GM10248 (cell line): ENCODE measurements at regions of chr20 and their contacts with region 1.

Region 1: GRCh38 chr20:50790651-50791277 is 4.1 kb upstream of the BCAS4 start:
- DNase-seq: peak; percentile 90
- CTCF ChIP-seq: peak; percentile 92

Region 2: GRCh38 chr20:50689864-50690633 is 100.7 kb before region 1 on chr20:
- CTCF ChIA-PET with region 1: no interaction called
- POLR2A ChIA-PET with region 1: no interaction called
- DNase-seq: no peak
- CTCF ChIP-seq: no peak

Region 3: DNA sequence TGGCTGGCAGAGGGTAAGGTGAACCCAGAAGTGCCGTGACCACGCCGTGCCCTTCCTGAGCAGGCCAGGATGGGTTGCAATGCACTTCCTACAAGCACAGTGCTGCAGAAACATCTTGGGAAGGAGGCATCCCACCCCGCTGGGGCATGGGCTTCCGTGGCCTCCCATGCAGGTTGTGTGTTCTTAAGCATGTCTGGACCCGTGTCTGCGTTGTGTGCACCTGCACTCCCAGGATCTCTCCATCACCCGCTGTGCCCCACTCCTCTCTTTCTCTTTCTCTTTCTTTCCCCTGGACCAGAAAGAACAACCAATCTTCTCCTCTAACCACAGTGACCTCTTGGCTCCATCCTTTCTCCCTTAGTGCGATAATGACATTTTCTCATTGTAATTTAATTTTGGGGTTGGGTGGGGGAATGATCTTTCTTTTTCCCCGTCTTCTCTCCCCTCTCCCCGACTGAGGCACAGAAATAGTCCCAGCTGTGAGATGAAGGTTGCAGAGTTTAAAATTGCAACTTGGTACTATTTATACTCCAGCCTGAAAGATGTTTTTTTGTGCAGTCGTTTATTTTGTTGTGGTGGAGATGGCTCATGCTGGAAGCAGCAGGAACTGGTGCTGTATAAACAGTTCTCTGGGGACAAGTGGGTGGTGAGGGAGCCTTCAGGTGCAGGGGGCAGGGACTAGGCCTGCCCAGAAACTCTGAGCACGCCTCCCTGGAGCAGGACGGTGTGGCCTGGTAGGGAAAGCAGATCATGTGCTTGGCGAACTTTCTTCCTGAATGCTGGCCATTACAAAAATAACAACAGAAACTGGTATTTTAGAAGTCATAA is 24.6 kb after region 1 on chr20:
- CTCF ChIA-PET with region 1: interaction called, 33 read pairs
- POLR2A ChIA-PET with region 1: no interaction called
- DNase-seq: peak; percentile 44
- CTCF ChIP-seq: no peak

Region 4: GRCh38 chr20:50891138-50891537 is 100.4 kb after region 1 on chr20:
- CTCF ChIA-PET with region 1: interaction called, 10 read pairs
- POLR2A ChIA-PET with region 1: no interaction called
- DNase-seq: no peak
- CTCF ChIP-seq: no peak

Region 5: DNA sequence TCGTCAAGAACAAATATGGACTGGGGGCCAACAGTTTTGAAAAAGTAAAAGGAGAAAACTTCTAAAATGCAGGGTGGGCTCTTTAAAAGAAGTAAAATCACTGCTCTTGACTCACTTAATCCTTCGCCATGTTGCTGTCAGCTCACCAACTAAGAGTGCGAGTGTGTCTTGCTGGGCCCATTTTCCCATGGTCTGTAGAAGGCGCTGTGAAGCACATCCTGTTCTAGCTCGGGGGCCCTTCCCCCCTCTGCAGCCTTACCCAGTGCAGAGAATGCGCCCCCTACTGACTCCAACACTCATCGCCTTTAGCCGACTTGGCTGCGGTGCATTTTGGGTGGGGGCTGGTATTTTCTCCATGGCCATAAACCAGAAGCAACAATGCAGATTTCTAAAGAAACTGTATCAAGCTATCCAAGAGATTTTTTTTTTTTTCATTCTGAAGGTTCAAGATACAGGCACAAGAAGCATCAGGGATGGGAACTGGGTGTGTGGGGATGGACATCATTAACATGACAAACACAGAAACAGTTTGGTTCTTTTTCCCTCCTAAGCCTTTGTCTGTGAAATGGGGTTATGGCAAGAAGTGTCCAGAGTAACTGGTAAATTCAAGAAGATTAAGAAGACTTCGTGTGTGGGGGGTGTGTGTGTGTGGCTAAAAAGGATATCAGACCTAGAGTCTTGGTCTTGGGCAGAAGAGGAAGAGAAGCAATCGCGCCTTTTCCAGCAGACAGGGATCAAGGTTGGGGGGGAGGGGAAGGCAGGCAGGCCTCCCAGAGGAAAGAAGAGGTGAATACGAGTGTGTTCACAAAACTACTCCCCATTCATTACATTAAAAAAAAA is 138.8 kb after region 1 on chr20:
- CTCF ChIA-PET with region 1: interaction called, 220 read pairs
- POLR2A ChIA-PET with region 1: interaction called, 9 read pairs
- DNase-seq: peak; percentile 84
- CTCF ChIP-seq: peak; percentile 95

Region 6: GRCh38 chr20:50958615-50959542 is 168.1 kb after region 1 on chr20 and contains the start of gene MOCS3:
- CTCF ChIA-PET with region 1: interaction called, 36 read pairs
- POLR2A ChIA-PET with region 1: interaction called, 5 read pairs
- DNase-seq: peak; percentile 90
- CTCF ChIP-seq: peak; percentile 9

Region 7: DNA sequence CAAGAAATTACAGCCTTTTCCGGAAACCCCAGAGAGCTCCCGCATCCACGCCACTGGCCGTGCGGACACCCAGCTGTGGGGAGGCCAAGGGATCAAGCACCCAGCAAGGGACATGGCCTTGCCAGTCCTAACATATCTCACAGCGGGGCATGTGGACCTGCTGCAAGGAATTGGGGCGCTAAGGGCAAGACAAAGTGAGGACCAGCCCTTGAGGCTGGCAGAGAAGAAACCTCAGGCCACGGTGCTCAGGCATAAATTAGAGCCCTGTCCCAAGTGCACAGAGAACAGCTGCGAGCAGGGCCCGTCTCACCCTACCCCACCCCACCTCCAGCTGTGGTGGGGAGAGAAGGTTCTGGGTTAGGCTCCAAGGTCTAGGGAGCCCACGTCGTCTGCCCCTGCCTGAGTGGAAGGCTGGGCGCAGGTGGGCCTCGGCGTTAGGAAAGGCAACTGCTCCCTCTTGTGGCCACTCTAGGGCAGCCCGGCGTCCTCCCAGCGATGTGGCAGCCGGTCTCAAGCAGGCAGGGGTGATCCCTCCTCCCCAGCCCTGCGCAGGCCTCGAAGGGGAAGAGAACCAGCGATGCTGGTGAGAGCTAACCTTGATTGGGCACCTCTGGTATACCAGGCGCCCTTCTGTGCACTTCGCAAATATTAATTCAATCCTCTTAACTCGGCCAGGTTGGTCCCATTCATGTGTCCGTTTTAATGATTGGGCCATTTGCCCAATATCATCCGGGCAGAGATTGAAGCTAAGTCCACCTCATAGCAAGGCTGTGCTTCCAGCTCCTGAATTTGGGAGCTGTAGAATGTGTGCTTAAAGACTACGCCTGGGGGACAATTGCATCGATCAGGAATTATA is 516.0 kb after region 1 on chr20:
- CTCF ChIA-PET with region 1: interaction called, 21 read pairs
- POLR2A ChIA-PET with region 1: no interaction called
- DNase-seq: peak; percentile 87
- CTCF ChIP-seq: peak; percentile 96